CD4-positive, alpha-beta T cell (primary cell): ENCODE measurements at regions of chr19 and their contacts with region 1.

Region 1: DNA sequence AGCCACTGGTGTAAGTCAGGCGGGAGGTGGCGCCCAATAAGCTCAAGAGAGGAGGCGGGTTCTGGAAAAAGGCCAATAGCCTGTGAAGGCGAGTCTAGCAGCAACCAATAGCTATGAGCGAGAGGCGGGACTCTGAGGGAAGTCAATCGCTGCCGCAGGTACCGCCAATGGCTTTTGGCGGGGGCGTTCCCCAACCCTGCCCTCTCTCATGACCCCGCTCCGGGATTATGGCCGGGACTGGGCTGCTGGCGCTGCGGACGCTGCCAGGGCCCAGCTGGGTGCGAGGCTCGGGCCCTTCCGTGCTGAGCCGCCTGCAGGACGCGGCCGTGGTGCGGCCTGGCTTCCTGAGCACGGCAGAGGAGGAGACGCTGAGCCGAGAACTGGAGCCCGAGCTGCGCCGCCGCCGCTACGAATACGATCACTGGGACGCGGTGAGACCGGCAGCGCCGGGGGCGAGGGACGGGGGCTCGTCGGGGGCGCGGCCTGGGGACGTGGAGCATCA is at the start of gene ALKBH7:
- DNase-seq: peak; percentile 89 to 100 (median 96)
- ATAC-seq: peak; percentile 75
- H3K4me3 ChIP-seq: peak within 1 kb of the TSS; percentile 66
- H3K4me3 Mint-ChIP-seq: peak within 1 kb of the TSS; percentile 96
- H3K27ac ChIP-seq: peak within 1 kb of the TSS; percentile 84 to 87
- H3K27ac Mint-ChIP-seq: peak within 1 kb of the TSS; percentile 89
- H3K4me1 ChIP-seq: peaks cover 18% of the 10 kb centered on the region
- H3K4me1 Mint-ChIP-seq: peaks cover 19% of the 10 kb centered on the region
- H3K27me3 ChIP-seq: no peaks in the 10 kb centered on the region
- H3K27me3 Mint-ChIP-seq: no peaks in the 10 kb centered on the region
- CTCF ChIP-seq: no peak
- total RNA-seq, gene ALKBH7: 75.3 to 78.7 TPM

Region 2: GRCh38 chr19:5977785-5978605 is 394.6 kb before region 1 on chr19 and contains the start of gene RANBP3:
- CTCF ChIA-PET with region 1: no interaction called
- POLR2A ChIA-PET with region 1: interaction called, 3 read pairs
- intact Hi-C with region 1: loop called in 1 of 2 experiments (anchors 10 kb)
- DNase-seq: peak; percentile 95 to 100 (median 99)
- ATAC-seq: peak; percentile 92
- H3K4me3 ChIP-seq: peak within 1 kb of the TSS; percentile 95
- H3K4me3 Mint-ChIP-seq: peak within 1 kb of the TSS; percentile 100
- H3K27ac ChIP-seq: peak within 1 kb of the TSS; percentile 78 to 85
- H3K27ac Mint-ChIP-seq: peak within 1 kb of the TSS; percentile 94
- H3K4me1 ChIP-seq: peaks cover 66% of the 10 kb centered on the region
- H3K4me1 Mint-ChIP-seq: peaks cover 52% of the 10 kb centered on the region
- H3K27me3 ChIP-seq: no peaks in the 10 kb centered on the region
- H3K27me3 Mint-ChIP-seq: no peaks in the 10 kb centered on the region
- CTCF ChIP-seq: no peak
- total RNA-seq, gene RANBP3: 82.7 to 88.7 TPM

Region 3: DNA sequence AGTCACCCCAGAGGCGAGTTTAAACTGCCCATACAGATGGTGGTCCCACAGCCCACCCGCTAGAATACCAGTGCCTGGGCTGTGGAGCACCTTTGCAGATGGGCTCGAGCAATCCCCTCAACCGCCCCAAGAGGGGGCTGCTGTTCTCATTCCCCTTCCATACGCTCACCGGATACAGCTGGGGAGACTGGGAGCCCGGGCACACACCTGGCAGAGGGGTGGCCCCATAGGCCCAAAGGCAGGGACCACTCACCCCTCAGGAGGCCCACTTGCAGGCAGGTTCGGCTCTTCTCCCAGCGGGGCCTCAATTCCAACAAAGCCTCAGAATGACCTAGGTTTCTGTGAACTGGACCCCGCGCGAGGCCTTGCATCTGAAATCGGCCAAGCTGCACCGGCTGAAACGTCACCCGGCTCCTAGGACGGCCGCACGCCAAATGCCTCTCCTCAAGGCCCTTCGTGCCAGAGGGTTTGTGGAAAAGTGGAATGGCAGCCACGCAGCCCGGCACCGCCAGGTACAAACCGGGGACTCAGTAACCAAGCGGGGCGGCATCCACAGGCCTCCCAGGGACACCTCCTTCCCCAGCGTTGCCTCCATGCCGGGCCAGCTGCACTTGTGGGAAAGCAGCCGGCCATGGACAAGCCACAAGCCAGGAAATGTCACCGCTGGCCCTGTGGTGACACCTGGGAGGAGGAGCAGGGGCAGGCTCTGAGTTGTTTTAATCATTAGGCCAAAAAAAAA is 111.6 kb before region 1 on chr19:
- CTCF ChIA-PET with region 1: no interaction called
- POLR2A ChIA-PET with region 1: no interaction called
- intact Hi-C with region 1: no loop called
- DNase-seq: peak in 9 of 14 experiments; percentile 9 to 57 (median 25)
- ATAC-seq: peak; percentile 68
- H3K4me3 ChIP-seq: no peak overlapping the region
- H3K4me3 Mint-ChIP-seq: no peak overlapping the region
- H3K27ac ChIP-seq: no peak overlapping the region
- H3K27ac Mint-ChIP-seq: no peak overlapping the region
- H3K4me1 ChIP-seq: peaks cover 14% of the 10 kb centered on the region
- H3K4me1 Mint-ChIP-seq: peaks cover 26% of the 10 kb centered on the region
- H3K27me3 ChIP-seq: no peaks in the 10 kb centered on the region
- H3K27me3 Mint-ChIP-seq: no peaks in the 10 kb centered on the region
- CTCF ChIP-seq: peak; percentile 60

Region 4: DNA sequence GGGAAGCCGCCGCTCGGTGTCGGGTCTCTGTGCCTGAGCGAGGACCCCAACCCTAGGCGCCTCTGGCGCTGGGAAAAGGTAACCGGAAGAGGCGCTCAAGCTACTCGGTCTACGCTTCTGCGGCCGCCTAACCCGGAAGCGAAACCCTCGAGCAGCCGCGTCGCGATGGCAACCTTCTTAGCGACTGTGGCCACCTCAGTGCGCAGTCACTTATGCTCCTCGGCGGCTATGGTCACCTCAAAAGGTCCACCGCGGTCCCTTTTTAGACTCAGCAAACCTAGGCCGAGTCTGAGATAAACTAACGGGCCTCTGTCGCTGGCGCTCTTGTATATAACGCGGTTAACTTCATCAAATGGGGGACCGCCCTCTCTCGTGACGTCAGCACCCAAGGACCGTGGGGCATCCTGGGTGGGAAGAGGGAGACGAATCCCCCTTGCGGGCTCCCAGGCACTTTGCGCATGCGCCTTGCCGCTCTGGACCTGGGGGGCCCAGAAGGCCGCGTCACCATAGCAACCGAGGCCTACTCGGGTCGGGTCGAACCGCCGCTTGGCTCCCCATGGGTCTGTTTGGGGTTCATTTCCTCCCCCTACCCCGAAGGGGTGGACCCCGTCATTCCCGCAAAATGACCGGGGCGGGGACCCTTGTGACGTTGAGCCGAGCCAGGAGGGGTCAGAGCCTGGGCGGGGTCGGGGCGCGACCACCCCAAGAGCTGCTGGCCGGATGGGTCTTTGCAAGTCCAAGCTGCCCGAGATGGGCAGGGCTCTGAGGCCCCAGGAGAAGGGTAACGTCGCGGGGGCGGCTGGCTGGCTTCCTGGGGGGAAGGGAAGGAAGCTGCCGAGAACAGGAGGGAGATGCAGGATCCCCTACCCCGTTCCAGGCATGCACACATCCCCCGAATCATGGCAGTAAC is 20.7 kb after region 1 on chr19 and contains the start of gene GTF2F1:
- CTCF ChIA-PET with region 1: no interaction called
- POLR2A ChIA-PET with region 1: interaction called, 21 read pairs
- intact Hi-C with region 1: loop called (anchors 1 kb)
- DNase-seq: peak; percentile 88 to 97 (median 90)
- ATAC-seq: peak; percentile 81
- H3K4me3 ChIP-seq: peak within 1 kb of the TSS; percentile 78
- H3K4me3 Mint-ChIP-seq: peak within 1 kb of the TSS; percentile 97
- H3K27ac ChIP-seq: peak within 1 kb of the TSS; percentile 89 to 98
- H3K27ac Mint-ChIP-seq: peak within 1 kb of the TSS; percentile 99
- H3K4me1 ChIP-seq: peaks cover 29% of the 10 kb centered on the region
- H3K4me1 Mint-ChIP-seq: peaks cover 29% of the 10 kb centered on the region
- H3K27me3 ChIP-seq: no peaks in the 10 kb centered on the region
- H3K27me3 Mint-ChIP-seq: no peaks in the 10 kb centered on the region
- CTCF ChIP-seq: no peak
- total RNA-seq, gene GTF2F1: 56.1 to 61.1 TPM

Region 5: DNA sequence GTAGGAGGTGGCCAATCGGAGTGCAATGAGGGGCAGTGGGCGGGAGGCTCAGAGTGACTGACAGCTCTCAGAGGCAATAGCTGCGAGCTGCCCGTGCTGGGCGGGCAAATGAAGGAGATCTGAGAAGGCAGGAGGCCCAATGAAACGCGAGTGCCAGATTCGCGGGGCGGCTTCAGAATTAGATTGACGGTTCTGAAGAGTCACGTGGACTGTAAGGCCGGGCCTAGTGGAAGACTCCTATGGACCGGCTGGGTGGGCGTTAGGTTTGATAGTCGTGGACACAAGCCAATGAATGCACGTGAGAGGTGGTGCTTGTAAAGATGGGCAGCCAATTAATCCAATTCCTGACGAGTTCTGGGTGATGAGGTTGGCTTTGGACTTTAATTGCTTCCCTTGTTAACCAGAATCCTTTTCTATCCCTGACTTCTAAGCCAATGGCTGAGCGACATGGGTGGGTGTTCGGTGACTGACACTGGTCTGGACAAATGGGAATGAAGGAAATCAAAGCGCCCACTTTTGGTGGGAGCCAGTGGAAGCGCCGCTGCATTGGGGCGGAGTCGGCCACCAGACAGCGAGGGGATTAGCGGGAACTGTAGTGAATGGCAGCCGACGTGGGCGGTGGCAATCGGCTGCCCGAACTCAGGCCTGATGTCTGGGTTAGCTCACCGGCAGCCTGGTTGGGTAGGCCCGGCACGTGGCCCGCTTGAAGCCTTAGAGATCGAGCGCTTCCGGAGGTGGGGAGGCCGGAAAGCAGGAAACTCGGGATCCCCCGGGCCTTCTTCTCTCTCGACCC is 52.5 kb after region 1 on chr19:
- CTCF ChIA-PET with region 1: no interaction called
- POLR2A ChIA-PET with region 1: interaction called, 45 read pairs
- intact Hi-C with region 1: loop called (anchors 1 to 2 kb)
- DNase-seq: peak; percentile 96 to 100 (median 98)
- ATAC-seq: peak; percentile 83
- H3K4me3 ChIP-seq: peak overlapping the region; percentile 46
- H3K4me3 Mint-ChIP-seq: peak overlapping the region; percentile 90
- H3K27ac ChIP-seq: peak overlapping the region; percentile 75 to 87
- H3K27ac Mint-ChIP-seq: peak overlapping the region; percentile 81
- H3K4me1 ChIP-seq: peaks cover 48% of the 10 kb centered on the region
- H3K4me1 Mint-ChIP-seq: peaks cover 37% of the 10 kb centered on the region
- H3K27me3 ChIP-seq: no peaks in the 10 kb centered on the region
- H3K27me3 Mint-ChIP-seq: no peaks in the 10 kb centered on the region
- CTCF ChIP-seq: no peak

Region 6: DNA sequence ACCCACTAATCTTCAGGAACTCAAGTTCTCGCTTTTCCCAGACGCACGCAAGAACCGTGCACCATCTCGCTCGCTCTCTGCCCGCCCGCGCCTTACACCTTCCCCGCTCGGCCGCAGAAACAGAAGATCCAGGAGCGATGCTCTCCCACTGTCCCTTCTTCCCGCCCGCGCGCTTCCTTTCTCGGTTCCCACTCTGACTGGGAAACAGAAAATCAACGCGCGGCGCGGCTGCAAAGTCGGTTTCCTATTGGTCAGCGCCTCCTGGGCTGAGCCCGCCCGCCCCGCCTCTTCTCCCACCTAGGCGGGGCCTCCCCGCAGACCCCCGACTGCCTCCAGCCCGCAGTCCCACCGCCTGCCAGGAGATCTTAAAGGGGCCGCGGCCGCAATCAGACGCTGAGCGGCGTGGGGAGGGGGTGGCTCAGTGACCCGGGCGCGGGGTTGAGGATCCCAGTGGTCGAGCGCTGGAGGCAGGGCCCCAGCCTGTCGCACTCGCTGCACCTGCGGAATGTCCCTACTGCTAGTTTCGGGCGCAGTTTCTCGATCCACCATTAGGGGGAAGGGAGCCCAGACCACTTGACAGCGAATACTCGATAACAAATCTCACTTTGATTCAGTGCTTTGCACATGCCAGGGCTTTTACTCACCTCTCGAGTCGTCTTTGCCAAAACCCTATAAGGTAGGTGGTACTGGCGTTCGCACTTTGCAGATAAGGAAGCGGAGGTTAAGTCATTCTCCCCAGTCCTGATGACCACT is 87.6 kb after region 1 on chr19:
- CTCF ChIA-PET with region 1: no interaction called
- POLR2A ChIA-PET with region 1: no interaction called
- intact Hi-C with region 1: loop called in 1 of 2 experiments (anchors 1 kb)
- DNase-seq: peak; percentile 95 to 97 (median 96)
- ATAC-seq: peak; percentile 80
- H3K4me3 ChIP-seq: peak overlapping the region; percentile 68
- H3K4me3 Mint-ChIP-seq: peak overlapping the region; percentile 91
- H3K27ac ChIP-seq: peak overlapping the region; percentile 44 to 89
- H3K27ac Mint-ChIP-seq: peak overlapping the region; percentile 86
- H3K4me1 ChIP-seq: peaks cover 36% of the 10 kb centered on the region
- H3K4me1 Mint-ChIP-seq: peaks cover 31% of the 10 kb centered on the region
- H3K27me3 ChIP-seq: no peaks in the 10 kb centered on the region
- H3K27me3 Mint-ChIP-seq: no peaks in the 10 kb centered on the region
- CTCF ChIP-seq: peak; percentile 75

Region 7: DNA sequence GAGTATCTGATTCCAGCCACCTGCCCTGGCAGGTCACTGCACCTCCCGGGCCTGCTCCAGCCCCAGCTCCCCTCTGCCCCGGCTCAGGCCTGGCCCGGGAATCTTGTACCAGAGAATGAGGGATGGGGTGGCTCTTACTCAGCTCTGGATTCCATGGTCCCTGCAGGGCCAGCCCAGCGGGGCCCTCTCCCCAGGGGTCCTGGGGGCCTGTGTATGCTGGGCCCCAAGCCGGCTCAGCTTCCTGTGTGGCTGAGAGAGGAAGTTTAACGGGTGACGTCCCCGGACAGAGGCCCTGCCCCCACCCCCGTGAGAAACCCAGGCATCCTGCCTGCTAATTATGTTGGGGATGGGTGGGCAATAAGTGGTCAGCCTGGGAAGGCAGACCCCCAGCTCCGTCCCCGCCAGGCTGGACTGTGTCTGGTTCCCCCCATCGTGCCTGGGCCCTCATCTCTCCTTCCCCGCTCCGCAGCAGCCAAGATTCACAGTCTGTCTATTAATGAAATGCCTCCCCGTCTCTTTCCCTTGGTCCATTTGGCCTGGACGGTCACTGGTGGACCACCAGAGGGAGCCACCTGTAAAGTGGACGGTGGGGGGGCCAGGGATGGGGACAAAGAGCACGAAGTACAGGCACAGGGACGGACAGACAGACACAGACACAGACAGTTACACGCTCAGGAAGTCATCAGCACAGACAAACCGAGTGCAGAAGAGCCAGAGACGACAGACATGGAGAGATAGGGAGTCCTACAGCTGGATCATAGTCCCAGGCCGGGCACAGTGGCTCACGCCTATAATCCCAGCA is 109.1 kb after region 1 on chr19 and contains the start of gene DENND1C:
- CTCF ChIA-PET with region 1: no interaction called
- POLR2A ChIA-PET with region 1: interaction called, 12 read pairs
- intact Hi-C with region 1: no loop called
- DNase-seq: peak; percentile 49 to 86 (median 66)
- ATAC-seq: peak; percentile 89
- H3K4me3 ChIP-seq: peak within 1 kb of the TSS; percentile 90
- H3K4me3 Mint-ChIP-seq: peak within 1 kb of the TSS; percentile 89
- H3K27ac ChIP-seq: peak within 1 kb of the TSS; percentile 87 to 93
- H3K27ac Mint-ChIP-seq: peak within 1 kb of the TSS; percentile 98
- H3K4me1 ChIP-seq: peaks cover 45% of the 10 kb centered on the region
- H3K4me1 Mint-ChIP-seq: peaks cover 46% of the 10 kb centered on the region
- H3K27me3 ChIP-seq: no peaks in the 10 kb centered on the region
- H3K27me3 Mint-ChIP-seq: no peaks in the 10 kb centered on the region
- CTCF ChIP-seq: no peak
- total RNA-seq, gene DENND1C: 111 to 118 TPM

Region 8: DNA sequence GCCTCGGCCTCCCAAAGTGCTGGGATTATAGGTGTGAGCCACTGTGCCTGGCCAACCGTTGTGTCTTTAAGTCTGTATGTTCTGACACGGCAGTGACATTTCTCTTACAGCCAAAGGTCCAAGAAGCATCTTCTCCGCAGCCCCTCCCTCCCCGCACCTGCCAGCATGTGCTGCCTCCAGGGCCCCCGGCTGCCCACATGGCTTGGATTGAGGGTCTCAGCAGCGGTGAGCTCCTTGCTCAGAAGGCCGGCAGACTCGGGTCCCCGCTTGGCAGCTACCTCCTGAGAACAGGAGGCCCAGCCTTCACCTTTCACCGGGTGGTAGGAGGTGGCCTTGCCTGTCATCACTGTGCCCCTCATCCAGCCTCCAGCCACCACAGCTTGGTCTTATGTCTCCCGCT is 1562.8 kb after region 1 on chr19:
- CTCF ChIA-PET with region 1: no interaction called
- POLR2A ChIA-PET with region 1: no interaction called
- intact Hi-C with region 1: no loop called
- DNase-seq: no peak
- ATAC-seq: no peak
- H3K4me3 ChIP-seq: no peak overlapping the region
- H3K4me3 Mint-ChIP-seq: no peak overlapping the region
- H3K27ac ChIP-seq: no peak overlapping the region
- H3K27ac Mint-ChIP-seq: no peak overlapping the region
- H3K4me1 ChIP-seq: peaks cover 2% of the 10 kb centered on the region
- H3K4me1 Mint-ChIP-seq: peaks cover 7% of the 10 kb centered on the region
- H3K27me3 ChIP-seq: no peaks in the 10 kb centered on the region
- H3K27me3 Mint-ChIP-seq: no peaks in the 10 kb centered on the region
- CTCF ChIP-seq: no peak